Endothelial cell of umbilical vein (primary cell): ENCODE measurements at regions of chr10 and their contacts with region 1.

Region 1: GRCh38 chr10:103685880-103686669 is 169.3 kb downstream of the SH3PXD2A start:
- DNase-seq: peak; percentile 60
- H3K4me3 ChIP-seq: no peak overlapping the region
- H3K27ac ChIP-seq: no peak overlapping the region
- H3K4me1 ChIP-seq: no peaks in the 10 kb centered on the region
- H3K27me3 ChIP-seq: no peaks in the 10 kb centered on the region
- CTCF ChIP-seq: peak; percentile 92 to 96
- POLR2A ChIP-seq: no peak

Region 2: GRCh38 chr10:103570844-103571655 is 115.0 kb before region 1 on chr10:
- CTCF ChIA-PET with region 1: no interaction called
- POLR2A ChIA-PET with region 1: no interaction called
- dilution Hi-C with region 1: no loop called
- intact Hi-C with region 1: no loop called
- DNase-seq: no peak
- H3K4me3 ChIP-seq: no peak overlapping the region
- H3K27ac ChIP-seq: no peak overlapping the region
- H3K4me1 ChIP-seq: no peaks in the 10 kb centered on the region
- H3K27me3 ChIP-seq: peaks cover 9 to 11% of the 10 kb centered on the region in 2 experiments
- CTCF ChIP-seq: no peak
- POLR2A ChIP-seq: no peak

Region 3: GRCh38 chr10:103592186-103593021 is 93.7 kb before region 1 on chr10:
- CTCF ChIA-PET with region 1: interaction called, 65 read pairs
- POLR2A ChIA-PET with region 1: no interaction called
- dilution Hi-C with region 1: no loop called
- intact Hi-C with region 1: no loop called
- DNase-seq: peak; percentile 40
- H3K4me3 ChIP-seq: no peak overlapping the region
- H3K27ac ChIP-seq: no peak overlapping the region
- H3K4me1 ChIP-seq: peaks cover 4% of the 10 kb centered on the region
- H3K27me3 ChIP-seq: no peaks in the 10 kb centered on the region
- CTCF ChIP-seq: peak; percentile 73 to 91
- POLR2A ChIP-seq: no peak

Region 4: DNA sequence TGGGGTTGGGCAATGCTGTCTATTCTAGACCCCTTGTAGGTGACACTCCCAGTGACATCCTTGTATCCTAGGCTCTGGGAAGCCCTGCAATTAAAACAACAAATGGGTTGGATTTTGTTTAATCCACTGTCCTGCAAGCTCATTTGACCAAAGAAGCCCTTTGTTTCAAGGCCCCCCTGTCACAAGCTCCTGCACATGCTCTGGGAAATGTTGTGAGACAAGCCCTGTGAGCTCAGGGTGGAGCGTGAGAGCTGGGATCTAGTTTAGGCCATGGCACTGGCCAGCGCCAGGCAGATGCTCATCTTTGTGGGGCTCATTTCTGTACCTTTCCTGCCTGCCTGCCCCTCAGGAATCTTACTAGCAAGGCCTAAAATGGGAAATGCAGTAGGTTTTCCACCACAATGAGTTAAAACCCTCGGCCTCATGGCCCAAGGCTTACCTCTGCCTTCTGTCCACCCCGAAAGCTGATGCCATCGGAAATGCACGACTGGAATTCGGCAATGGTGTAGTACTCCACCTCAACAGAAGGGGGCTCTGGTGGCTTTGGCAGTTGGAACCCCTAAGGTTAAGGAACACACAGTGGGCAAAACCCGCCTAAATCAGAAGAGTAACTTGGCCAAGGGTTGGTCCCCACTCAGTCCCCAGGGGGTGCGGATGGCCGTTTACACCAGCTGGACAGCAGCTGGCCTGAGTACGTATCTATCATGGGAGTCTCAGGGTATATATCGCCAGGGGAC is 80.5 kb before region 1 on chr10:
- CTCF ChIA-PET with region 1: interaction called, 99 read pairs
- POLR2A ChIA-PET with region 1: no interaction called
- dilution Hi-C with region 1: no loop called
- intact Hi-C with region 1: loop called (anchors 1 kb)
- DNase-seq: peak; percentile 28
- H3K4me3 ChIP-seq: no peak overlapping the region
- H3K27ac ChIP-seq: no peak overlapping the region
- H3K4me1 ChIP-seq: no peaks in the 10 kb centered on the region
- H3K27me3 ChIP-seq: no peaks in the 10 kb centered on the region
- CTCF ChIP-seq: peak; percentile 63 to 71
- POLR2A ChIP-seq: no peak

Region 5: DNA sequence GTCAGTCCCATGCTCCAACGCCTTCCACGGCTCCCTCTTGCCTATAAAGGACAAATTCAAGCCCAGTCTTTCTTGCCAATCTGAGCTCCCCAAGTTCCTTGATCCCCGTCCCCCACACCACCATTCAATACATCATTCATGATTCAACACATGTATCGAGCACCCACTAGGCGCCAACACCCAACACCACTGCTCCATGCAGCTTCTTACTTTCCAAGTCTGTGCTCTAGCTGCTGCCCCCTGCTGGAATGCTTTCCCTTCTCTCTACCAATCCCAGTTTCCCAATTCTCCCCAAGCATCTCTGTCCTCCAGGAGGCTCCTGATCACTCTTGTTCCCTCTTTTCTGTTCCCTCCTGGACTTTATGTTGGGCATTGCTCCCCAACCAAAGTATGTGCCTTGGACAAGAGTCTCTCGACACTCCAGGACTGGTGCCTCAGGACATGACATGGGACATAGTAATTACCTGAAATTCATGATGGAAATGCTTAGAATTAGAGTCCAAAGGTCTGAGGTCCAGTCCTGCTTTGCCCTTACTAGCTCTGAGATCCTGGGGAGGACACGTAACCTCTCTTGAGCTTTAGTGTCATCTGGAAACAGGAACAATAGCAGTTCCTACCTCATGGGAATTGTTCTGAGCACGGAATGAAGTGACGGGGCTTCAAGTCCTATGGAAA is 19.9 kb before region 1 on chr10:
- CTCF ChIA-PET with region 1: interaction called, 25 read pairs
- POLR2A ChIA-PET with region 1: no interaction called
- dilution Hi-C with region 1: no loop called
- intact Hi-C with region 1: no loop called
- DNase-seq: no peak
- H3K4me3 ChIP-seq: no peak overlapping the region
- H3K27ac ChIP-seq: no peak overlapping the region
- H3K4me1 ChIP-seq: peaks cover 13% of the 10 kb centered on the region
- H3K27me3 ChIP-seq: no peaks in the 10 kb centered on the region
- CTCF ChIP-seq: peak; percentile 43 to 51
- POLR2A ChIP-seq: no peak

Region 6: DNA sequence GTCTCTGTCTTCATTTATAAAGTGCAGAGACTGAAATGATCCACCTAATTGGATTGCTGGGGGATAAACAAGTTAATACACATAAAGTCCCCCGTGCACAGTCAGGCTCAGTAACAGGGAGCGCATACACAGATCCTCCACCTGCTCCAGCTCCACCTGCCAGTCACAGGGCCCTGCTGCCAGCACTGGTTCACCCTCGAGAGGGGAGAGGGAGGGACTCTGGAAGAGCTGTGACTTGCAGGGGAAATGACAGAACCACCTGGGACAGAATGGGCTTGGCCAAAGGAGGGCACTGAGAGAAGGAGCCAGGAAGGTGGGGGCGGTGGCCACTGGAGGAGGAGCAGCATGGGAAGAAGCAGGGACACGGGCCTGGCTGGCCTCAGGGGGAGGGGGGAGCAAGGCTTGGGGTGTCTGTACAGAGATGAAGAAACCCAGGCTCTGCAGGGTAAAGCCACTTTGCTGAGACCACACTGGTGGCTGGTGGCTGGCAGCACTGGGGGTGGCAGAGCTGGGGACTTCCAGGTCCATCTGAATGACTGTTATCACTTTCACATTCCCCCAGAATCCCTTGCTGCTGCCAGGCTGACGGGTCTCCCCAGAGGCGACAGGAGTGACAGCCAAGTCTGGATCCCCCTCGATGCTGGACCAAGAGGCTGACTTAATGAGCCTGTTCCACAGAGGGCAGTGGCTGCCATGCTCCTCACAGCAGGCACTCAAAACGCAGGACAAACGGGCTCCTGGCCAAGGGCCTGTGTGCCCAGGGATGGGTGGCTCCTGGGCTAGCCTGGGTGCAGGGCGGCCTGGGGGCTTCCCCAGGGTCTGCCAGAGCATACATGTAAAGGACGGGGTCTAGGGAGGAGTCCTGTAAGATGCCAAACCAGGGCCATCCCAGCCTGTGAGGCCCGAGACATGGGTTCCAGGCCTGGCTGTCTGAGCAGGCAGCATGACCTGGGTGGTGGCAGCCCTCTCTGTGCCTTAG is 18.2 kb after region 1 on chr10:
- CTCF ChIA-PET with region 1: interaction called, 15 read pairs
- POLR2A ChIA-PET with region 1: no interaction called
- dilution Hi-C with region 1: no loop called
- intact Hi-C with region 1: no loop called
- DNase-seq: no peak
- H3K4me3 ChIP-seq: no peak overlapping the region
- H3K27ac ChIP-seq: no peak overlapping the region
- H3K4me1 ChIP-seq: no peaks in the 10 kb centered on the region
- H3K27me3 ChIP-seq: no peaks in the 10 kb centered on the region
- CTCF ChIP-seq: no peak
- POLR2A ChIP-seq: no peak